Left lung (tissue), 14 donors: ENCODE measurements at regions of chr20 and their contacts with region 1.

Region 1: GRCh38 chr20:52379723-52380336 is 188.3 kb upstream of the ZFP64 start:
- DNase-seq: peak in 2 of 4 donors; percentile 30 to 63
- ATAC-seq: peak; percentile 61
- H3K4me3 ChIP-seq: no peak overlapping the region
- H3K27ac ChIP-seq: no peak overlapping the region
- H3K4me1 ChIP-seq: no peaks in the 10 kb centered on the region
- H3K27me3 ChIP-seq: no peaks in the 10 kb centered on the region
- CTCF ChIP-seq: peak; percentile 85 to 89

Region 2: DNA sequence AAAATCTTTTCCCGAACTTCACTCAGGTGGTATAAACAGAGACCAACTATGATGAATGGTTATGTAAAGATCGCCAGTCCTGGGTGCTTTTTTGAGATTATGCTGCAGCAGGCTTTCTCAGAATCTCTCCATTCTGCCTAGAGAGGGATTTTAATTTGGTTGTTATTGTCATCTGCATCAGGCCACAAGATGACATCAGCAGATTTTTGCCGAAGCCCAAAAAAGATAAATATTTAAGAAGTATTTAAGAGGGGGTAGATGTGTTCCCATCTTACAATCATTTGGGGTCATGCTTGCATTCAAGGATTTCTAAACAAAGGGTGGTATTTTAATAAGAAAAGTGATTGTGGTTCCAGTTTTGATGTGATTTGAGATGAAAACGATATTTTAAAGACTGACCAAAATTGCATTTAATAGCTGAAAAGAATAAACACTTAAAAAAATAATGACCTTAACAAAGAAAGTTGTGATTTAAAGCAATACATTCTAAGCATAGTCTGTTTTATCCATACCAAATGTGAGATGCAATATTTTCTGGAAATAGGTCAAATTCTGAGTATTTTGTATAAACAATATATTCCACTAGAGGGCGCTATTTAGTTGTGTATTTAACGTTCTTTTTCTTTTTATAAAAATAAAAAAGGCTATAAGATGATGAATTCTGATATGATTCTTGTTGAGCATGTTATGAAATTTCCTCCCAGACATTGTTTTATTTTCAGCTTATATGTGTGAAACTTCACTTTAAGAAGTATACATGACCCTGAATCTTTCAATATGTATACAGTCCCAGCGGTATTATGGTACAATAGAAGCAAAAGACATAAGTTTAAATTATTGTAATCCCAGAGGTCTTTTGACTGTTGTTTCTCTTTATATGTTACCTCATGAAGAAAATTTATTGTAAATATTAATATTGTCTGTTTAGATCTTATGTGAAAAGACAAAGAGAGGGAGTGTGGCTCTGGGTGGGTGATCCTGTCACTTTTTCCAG is 137.3 kb before region 1 on chr20:
- intact Hi-C with region 1: loop called in 1 of 2 experiments (anchors 10 kb)
- DNase-seq: peak in 2 of 4 donors; percentile 31 to 39
- ATAC-seq: no peak
- H3K4me3 ChIP-seq: no peak overlapping the region
- H3K27ac ChIP-seq: no peak overlapping the region
- H3K4me1 ChIP-seq: no peaks in the 10 kb centered on the region
- H3K27me3 ChIP-seq: no peaks in the 10 kb centered on the region
- CTCF ChIP-seq: peak; percentile 53 to 57